ENCODE measurements at regions of chr13 and their contacts with region 1.

Region 1: GRCh38 chr13:36131222-36131930 is at the start of gene DCLK1:
- DNase-seq: no peak
- H3K4me3 ChIP-seq: peak within 1 kb of the TSS; percentile 48 to 75
- H3K27ac ChIP-seq: peak within 1 kb of the TSS; percentile 64
- H3K4me1 ChIP-seq: peaks cover 7% of the 10 kb centered on the region
- H3K27me3 ChIP-seq: no peaks in the 10 kb centered on the region
- CTCF ChIP-seq: no peak
- POLR2A ChIP-seq: peak in 1 of 2 donors; percentile 16
- total RNA-seq, gene DCLK1: 36.1 TPM

Region 2: DNA sequence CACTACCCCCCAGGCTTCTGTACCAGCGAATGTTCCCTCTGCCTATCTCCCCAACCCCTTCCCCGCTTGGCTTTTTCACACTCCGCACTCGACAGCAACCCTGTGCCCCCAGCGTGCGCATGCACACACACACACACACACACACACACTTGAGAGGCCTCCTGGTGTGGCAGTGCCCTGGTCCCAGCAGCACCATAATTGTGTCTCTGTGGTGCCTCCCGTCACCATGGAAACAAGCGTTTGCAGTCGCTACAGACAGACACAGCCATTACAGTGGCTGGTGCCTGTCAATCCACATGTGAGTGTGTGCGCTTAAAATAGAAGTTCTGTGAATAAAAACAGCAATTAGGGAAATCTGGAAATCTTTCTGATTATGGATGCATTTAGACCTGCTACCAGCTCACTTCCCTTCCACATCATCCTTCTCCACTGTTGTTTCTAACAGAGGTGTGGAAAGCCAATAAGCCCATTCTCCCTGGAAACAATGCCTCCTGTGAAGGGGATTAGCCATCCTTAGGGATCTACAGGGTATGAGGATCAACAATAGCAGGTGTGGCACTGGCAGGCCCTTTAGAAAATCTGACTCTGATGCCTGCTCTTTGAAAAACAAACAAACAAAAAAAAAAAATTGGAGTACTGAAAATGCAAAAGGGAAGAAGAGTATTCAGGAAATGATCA is 146.5 kb before region 1 on chr13:
- intact Hi-C with region 1: loop called (anchors 10 kb)
- DNase-seq: peak in 1 of 2 donors; percentile 56
- H3K4me3 ChIP-seq: no peak overlapping the region
- H3K27ac ChIP-seq: no peak overlapping the region
- H3K4me1 ChIP-seq: no peaks in the 10 kb centered on the region
- H3K27me3 ChIP-seq: no peaks in the 10 kb centered on the region
- CTCF ChIP-seq: no peak
- POLR2A ChIP-seq: no peak

Measured in vagina (tissue), 2 donors.